CD8-positive, alpha-beta T cell (primary cell): ENCODE measurements at regions of chr11 and their contacts with region 1.

Region 1: GRCh38 chr11:34997952-34998528 is 81.6 kb downstream of the PDHX start:
- DNase-seq: peak in 2 of 9 experiments; percentile 38 to 54
- ATAC-seq: peak; percentile 58
- H3K4me3 ChIP-seq: no peak overlapping the region
- H3K4me3 Mint-ChIP-seq: no peak overlapping the region
- H3K27ac ChIP-seq: no peak overlapping the region
- H3K27ac Mint-ChIP-seq: peak overlapping the region; percentile 49
- H3K4me1 ChIP-seq: peaks cover 6% of the 10 kb centered on the region
- H3K4me1 Mint-ChIP-seq: peaks cover 14% of the 10 kb centered on the region
- H3K27me3 ChIP-seq: no peaks in the 10 kb centered on the region
- H3K27me3 Mint-ChIP-seq: no peaks in the 10 kb centered on the region
- CTCF ChIP-seq: peak; percentile 95

Region 2: GRCh38 chr11:34366522-34366921 is 631.5 kb before region 1 on chr11:
- CTCF ChIA-PET with region 1: no interaction called
- POLR2A ChIA-PET with region 1: no interaction called
- intact Hi-C with region 1: no loop called
- DNase-seq: peak in 1 of 9 experiments; percentile 13
- ATAC-seq: no peak
- H3K4me3 ChIP-seq: no peak overlapping the region
- H3K4me3 Mint-ChIP-seq: no peak overlapping the region
- H3K27ac ChIP-seq: no peak overlapping the region
- H3K27ac Mint-ChIP-seq: no peak overlapping the region
- H3K4me1 ChIP-seq: no peaks in the 10 kb centered on the region
- H3K4me1 Mint-ChIP-seq: peaks cover 4% of the 10 kb centered on the region
- H3K27me3 ChIP-seq: peaks cover 0 to 3% of the 10 kb centered on the region in 2 experiments
- H3K27me3 Mint-ChIP-seq: peaks cover 12% of the 10 kb centered on the region
- CTCF ChIP-seq: no peak

Region 3: DNA sequence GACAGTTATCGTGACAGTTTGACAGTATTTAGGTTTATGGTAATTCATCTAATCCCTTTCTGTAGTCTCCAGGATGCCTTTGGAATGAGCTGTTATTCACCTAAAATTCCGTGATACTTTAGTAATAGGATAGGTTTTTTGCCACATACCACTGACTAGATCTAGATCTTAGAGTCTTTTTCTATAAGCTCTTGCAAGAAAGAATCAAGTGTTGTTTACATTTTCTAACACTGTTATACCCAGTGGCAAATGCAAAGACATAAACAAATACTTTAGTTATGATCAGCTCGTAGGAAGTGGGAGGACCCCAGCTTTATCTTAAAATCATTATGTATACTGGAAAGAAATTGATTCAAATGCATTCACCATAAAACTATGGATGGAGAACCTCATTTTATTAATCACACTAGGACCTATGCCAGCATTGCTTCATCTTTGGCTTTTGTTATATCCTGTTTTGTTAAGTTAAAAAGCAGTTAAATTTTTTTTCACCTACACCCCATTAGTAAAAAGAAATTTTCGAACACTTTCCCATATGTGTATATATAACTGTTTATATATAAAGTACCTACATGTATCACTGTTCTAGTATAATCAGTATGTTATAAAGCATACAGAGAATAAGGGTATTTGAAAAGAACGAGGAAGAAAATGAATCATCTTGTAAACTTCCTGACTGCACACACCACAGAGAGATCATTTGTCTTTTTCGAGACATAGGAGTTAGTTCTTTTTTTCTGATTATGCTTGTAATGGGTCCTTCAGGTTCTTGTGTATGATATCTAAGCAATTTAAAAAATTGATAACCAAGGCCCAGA is 20.7 kb before region 1 on chr11:
- CTCF ChIA-PET with region 1: no interaction called
- POLR2A ChIA-PET with region 1: no interaction called
- intact Hi-C with region 1: no loop called
- DNase-seq: no peak
- ATAC-seq: no peak
- H3K4me3 ChIP-seq: no peak overlapping the region
- H3K4me3 Mint-ChIP-seq: no peak overlapping the region
- H3K27ac ChIP-seq: no peak overlapping the region
- H3K27ac Mint-ChIP-seq: no peak overlapping the region
- H3K4me1 ChIP-seq: no peaks in the 10 kb centered on the region
- H3K4me1 Mint-ChIP-seq: peaks cover 16% of the 10 kb centered on the region
- H3K27me3 ChIP-seq: no peaks in the 10 kb centered on the region
- H3K27me3 Mint-ChIP-seq: no peaks in the 10 kb centered on the region
- CTCF ChIP-seq: no peak

Region 4: GRCh38 chr11:35040221-35040942 is 42.3 kb after region 1 on chr11:
- CTCF ChIA-PET with region 1: no interaction called
- POLR2A ChIA-PET with region 1: no interaction called
- intact Hi-C with region 1: loop called (anchors 1 to 5 kb)
- DNase-seq: peak in 8 of 9 experiments; percentile 16 to 87 (median 55)
- ATAC-seq: peak; percentile 77
- H3K4me3 ChIP-seq: peak overlapping the region in 1 of 2 experiments; percentile 46
- H3K4me3 Mint-ChIP-seq: peak overlapping the region; percentile 79
- H3K27ac ChIP-seq: peak overlapping the region; percentile 36 to 83
- H3K27ac Mint-ChIP-seq: peak overlapping the region; percentile 97
- H3K4me1 ChIP-seq: peaks cover 25% of the 10 kb centered on the region
- H3K4me1 Mint-ChIP-seq: peaks cover 35% of the 10 kb centered on the region
- H3K27me3 ChIP-seq: no peaks in the 10 kb centered on the region
- H3K27me3 Mint-ChIP-seq: no peaks in the 10 kb centered on the region
- CTCF ChIP-seq: no peak

Region 5: GRCh38 chr11:35138943-35139721 is 141.1 kb after region 1 on chr11 and contains the start of gene CD44:
- CTCF ChIA-PET with region 1: interaction called, 11 read pairs
- POLR2A ChIA-PET with region 1: interaction called, 10 read pairs
- intact Hi-C with region 1: loop called (anchors 1 to 5 kb)
- DNase-seq: peak; percentile 67 to 93 (median 85)
- ATAC-seq: peak; percentile 83
- H3K4me3 ChIP-seq: peak within 1 kb of the TSS; percentile 80 to 97
- H3K4me3 Mint-ChIP-seq: peak within 1 kb of the TSS; percentile 90
- H3K27ac ChIP-seq: peak within 1 kb of the TSS; percentile 82 to 98
- H3K27ac Mint-ChIP-seq: peak within 1 kb of the TSS; percentile 98
- H3K4me1 ChIP-seq: peaks cover 35% of the 10 kb centered on the region
- H3K4me1 Mint-ChIP-seq: peaks cover 47% of the 10 kb centered on the region
- H3K27me3 ChIP-seq: no peaks in the 10 kb centered on the region
- H3K27me3 Mint-ChIP-seq: no peaks in the 10 kb centered on the region
- CTCF ChIP-seq: no peak
- total RNA-seq, gene CD44: 1,070 to 1,104 TPM

Region 6: DNA sequence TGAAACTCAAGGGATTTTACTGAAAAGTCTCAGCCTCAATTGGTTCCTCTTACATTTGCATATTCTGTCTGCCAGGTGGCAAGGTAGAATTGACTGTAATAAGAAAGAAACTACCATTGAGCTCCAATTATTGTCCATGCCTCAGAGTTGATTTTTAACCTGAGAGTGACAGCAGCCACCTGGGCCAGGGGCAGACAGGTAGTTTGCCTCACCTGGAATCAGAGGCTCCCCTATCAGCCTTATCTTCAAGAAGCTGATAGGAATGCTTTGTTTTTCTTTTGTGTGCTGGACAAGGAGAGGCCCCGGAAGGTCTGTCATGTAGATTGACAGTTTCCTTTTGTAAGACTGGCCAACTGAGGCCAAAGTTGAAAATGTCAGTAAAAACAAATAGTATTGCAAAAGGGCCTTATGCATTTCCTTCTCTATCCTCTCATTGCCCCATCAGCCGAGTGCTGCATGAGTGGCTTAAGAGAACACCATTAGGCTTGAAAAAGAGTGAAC is 175.0 kb after region 1 on chr11:
- CTCF ChIA-PET with region 1: interaction called, 4 read pairs
- POLR2A ChIA-PET with region 1: interaction called, 3 read pairs
- intact Hi-C with region 1: loop called in 1 of 2 experiments (anchors 1 kb)
- DNase-seq: peak in 1 of 9 experiments; percentile 37
- ATAC-seq: no peak
- H3K4me3 ChIP-seq: peak overlapping the region in 1 of 2 experiments; percentile 10
- H3K4me3 Mint-ChIP-seq: peak overlapping the region; percentile 68
- H3K27ac ChIP-seq: peak overlapping the region; percentile 54 to 97
- H3K27ac Mint-ChIP-seq: peak overlapping the region; percentile 100
- H3K4me1 ChIP-seq: peaks cover 95% of the 10 kb centered on the region
- H3K4me1 Mint-ChIP-seq: peaks cover 96% of the 10 kb centered on the region
- H3K27me3 ChIP-seq: no peaks in the 10 kb centered on the region
- H3K27me3 Mint-ChIP-seq: no peaks in the 10 kb centered on the region
- CTCF ChIP-seq: no peak

Region 7: DNA sequence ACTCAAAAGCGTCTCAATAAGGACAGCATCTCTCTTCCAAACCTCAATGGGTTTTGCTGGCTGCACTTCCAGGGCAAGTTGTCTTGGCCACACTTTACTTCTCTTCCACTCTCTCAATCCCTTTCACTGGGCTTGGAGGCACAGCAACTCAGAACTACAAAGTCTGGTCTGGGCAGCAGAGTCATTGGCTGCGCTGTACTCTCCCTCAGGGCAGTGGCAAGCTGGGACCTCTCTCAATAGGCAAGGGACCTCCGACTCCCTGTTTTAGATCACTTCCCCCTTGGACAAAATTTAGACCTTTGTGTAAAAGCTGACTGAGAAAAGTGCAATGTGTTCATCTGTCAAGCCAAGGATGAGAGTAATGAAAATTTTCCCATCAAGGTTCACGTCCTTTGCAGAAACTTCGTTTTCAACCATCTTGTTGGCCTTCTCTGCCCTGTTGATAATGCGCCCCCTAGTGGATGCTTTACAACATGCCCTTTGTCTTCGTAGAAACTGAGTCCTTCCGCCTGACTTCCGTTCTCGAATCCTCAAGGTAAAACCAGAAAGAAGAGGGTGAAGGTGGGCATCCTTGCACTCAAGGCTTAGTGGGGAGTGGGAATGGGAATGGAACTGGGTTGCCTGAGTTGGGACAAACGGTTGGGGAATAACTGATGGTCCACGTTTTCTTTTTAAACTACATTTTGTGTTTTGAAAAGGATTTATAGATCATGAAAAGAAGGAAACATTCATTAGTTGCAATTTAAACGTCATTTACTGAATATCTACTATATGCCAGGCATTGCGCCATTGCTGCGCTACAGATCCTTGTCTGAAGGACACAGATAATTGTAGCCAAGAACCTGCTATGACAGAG is 240.0 kb after region 1 on chr11:
- CTCF ChIA-PET with region 1: interaction called, 4 read pairs
- POLR2A ChIA-PET with region 1: no interaction called
- intact Hi-C with region 1: loop called in 1 of 2 experiments (anchors 2 kb)
- DNase-seq: peak in 7 of 9 experiments; percentile 29 to 84 (median 62)
- ATAC-seq: no peak
- H3K4me3 ChIP-seq: no peak overlapping the region
- H3K4me3 Mint-ChIP-seq: no peak overlapping the region
- H3K27ac ChIP-seq: no peak overlapping the region
- H3K27ac Mint-ChIP-seq: no peak overlapping the region
- H3K4me1 ChIP-seq: peaks cover 46% of the 10 kb centered on the region
- H3K4me1 Mint-ChIP-seq: peaks cover 87% of the 10 kb centered on the region
- H3K27me3 ChIP-seq: no peaks in the 10 kb centered on the region
- H3K27me3 Mint-ChIP-seq: no peaks in the 10 kb centered on the region
- CTCF ChIP-seq: peak; percentile 65